ENCODE measurements at regions of chr19 and their contacts with region 1.

Region 1: GRCh38 chr19:28324275-28325060 is 888.5 kb downstream of the UQCRFS1 start:
- DNase-seq: no peak
- ATAC-seq: no peak
- H3K4me3 ChIP-seq: no peak overlapping the region
- H3K27ac ChIP-seq: no peak overlapping the region
- H3K4me1 ChIP-seq: no peaks in the 10 kb centered on the region
- H3K27me3 ChIP-seq: no peaks in the 10 kb centered on the region
- CTCF ChIP-seq: no peak
- EP300 ChIP-seq: no peak
- POLR2A ChIP-seq: no peak
- RAD21 ChIP-seq: no peak

Region 2: GRCh38 chr19:27974082-27974513 is 350.4 kb before region 1 on chr19:
- CTCF ChIA-PET with region 1: interaction called, 7 read pairs
- POLR2A ChIA-PET with region 1: interaction called, 3 read pairs
- in situ Hi-C with region 1: no loop called
- intact Hi-C with region 1: loop called (anchors 1 kb)
- DNase-seq: peak; percentile 11 to 26 (median 25)
- ATAC-seq: peak; percentile 73; the same call in 2 of the 3 replicates
- H3K4me3 ChIP-seq: no peak overlapping the region
- H3K27ac ChIP-seq: no peak overlapping the region
- H3K4me1 ChIP-seq: no peaks in the 10 kb centered on the region
- H3K27me3 ChIP-seq: no peaks in the 10 kb centered on the region
- CTCF ChIP-seq: peak; percentile 49 to 63 (median 63)
- EP300 ChIP-seq: no peak
- POLR2A ChIP-seq: no peak
- RAD21 ChIP-seq: peak; percentile 53 to 68

Region 3: DNA sequence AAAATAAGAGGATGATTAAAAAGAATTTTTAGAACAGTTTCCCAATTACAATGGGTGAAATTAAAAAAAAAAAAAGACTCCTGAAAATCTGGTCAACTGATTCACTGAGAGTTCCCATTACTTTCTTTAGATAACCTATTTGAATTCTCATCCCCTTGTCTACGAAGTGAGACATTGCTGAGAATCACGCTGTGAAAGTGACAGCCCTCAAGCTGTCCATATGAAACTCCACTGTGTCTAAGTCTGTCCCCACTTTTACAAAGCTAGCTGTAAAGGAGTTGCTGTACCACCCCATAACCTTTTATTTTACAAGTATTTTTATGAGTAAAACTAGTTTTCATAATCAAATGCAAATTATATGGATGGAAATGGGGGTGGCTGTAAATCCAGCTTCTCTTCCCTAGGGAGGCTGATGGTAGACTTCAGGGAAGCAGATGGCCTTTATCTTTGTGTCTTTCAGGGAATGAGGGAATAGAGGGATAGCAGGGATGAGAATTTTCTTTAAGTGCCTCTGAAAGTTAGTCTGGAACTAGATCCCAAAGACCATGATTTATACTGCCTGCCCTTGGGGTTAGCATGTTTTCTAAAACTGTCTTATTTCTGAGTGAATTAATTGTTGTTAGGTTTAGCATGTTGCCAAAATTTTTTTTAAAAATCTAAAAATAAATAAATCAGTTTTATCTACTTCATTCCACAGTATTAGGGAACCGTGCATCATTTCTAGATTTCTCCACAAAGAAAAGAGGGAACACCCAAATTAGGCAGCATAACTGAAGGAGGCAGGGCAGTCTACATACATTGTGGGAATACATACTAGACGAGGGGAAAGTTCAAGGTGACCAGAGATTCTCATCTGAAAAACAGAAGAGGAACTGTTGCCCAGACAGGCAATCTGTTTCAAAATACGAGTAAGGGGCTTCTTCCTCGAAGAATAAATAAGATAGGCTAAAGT is 330.6 kb before region 1 on chr19:
- CTCF ChIA-PET with region 1: no interaction called
- POLR2A ChIA-PET with region 1: no interaction called
- in situ Hi-C with region 1: no loop called
- intact Hi-C with region 1: no loop called
- DNase-seq: no peak
- ATAC-seq: no peak
- H3K4me3 ChIP-seq: no peak overlapping the region
- H3K27ac ChIP-seq: no peak overlapping the region
- H3K4me1 ChIP-seq: no peaks in the 10 kb centered on the region
- H3K27me3 ChIP-seq: no peaks in the 10 kb centered on the region
- CTCF ChIP-seq: no peak
- EP300 ChIP-seq: no peak
- POLR2A ChIP-seq: no peak
- RAD21 ChIP-seq: no peak